Heart right ventricle (tissue), 16 donors: ENCODE measurements at regions of chr1 and their contacts with region 1.

Region 1: GRCh38 chr1:225999227-225999911 is at the start of gene SDE2:
- DNase-seq: peak; percentile 100
- ATAC-seq: peak; percentile 95 to 99 (median 97)
- H3K4me3 ChIP-seq: peak within 1 kb of the TSS; percentile 62 to 94 (median 76)
- H3K27ac ChIP-seq: peak within 1 kb of the TSS; percentile 91 to 100 (median 96)
- H3K4me1 ChIP-seq: peaks cover 13 to 73% (median 61%) of the 10 kb centered on the region in 9 donors
- H3K27me3 ChIP-seq: no peaks in the 10 kb centered on the region
- CTCF ChIP-seq: peak in 2 of 9 donors; percentile 15 to 26
- total RNA-seq, gene SDE2: 10.3 to 20.3 (median 13.9) TPM

Region 2: GRCh38 chr1:226034482-226034881 is 35.1 kb after region 1 on chr1:
- intact Hi-C with region 1: no loop called
- DNase-seq: peak; percentile 83 to 84
- ATAC-seq: peak; percentile 91 to 99 (median 94)
- H3K4me3 ChIP-seq: no peak overlapping the region
- H3K27ac ChIP-seq: peak overlapping the region in 9 of 10 donors; percentile 47 to 90 (median 72)
- H3K4me1 ChIP-seq: peaks cover 0 to 52% (median 0%) of the 10 kb centered on the region in 9 donors
- H3K27me3 ChIP-seq: no peaks in the 10 kb centered on the region
- CTCF ChIP-seq: no peak

Region 3: GRCh38 chr1:226069811-226070489 is 70.6 kb after region 1 on chr1:
- intact Hi-C with region 1: no loop called
- DNase-seq: no peak
- ATAC-seq: no peak
- H3K4me3 ChIP-seq: no peak overlapping the region
- H3K27ac ChIP-seq: no peak overlapping the region
- H3K4me1 ChIP-seq: peaks cover 5 to 66% (median 50%) of the 10 kb centered on the region in 9 donors
- H3K27me3 ChIP-seq: no peaks in the 10 kb centered on the region
- CTCF ChIP-seq: no peak

Region 4: DNA sequence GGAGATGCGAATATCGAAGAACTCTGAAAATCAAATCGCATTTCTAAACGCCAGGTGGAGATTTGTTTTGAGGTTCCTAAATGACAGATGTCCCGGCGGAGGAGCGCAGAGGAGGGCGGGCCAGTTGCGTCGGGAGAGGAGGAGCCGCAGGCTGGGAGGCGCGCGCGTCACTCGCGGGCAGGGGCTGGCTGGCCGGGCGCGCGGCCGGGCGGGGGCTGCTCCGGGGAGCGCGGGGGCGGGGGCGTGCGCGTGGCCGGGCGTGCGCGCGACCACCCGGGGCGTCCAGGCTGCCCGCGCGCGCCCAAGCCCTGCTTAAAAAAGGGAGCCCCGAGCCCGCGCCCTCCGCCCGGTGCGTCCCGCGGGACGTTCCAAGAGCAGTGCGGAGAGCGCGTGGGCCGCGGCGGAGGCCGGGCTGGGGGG is 110.5 kb after region 1 on chr1:
- intact Hi-C with region 1: loop called in 3 of 10 experiments (anchors 2 to 5 kb)
- DNase-seq: peak; percentile 90 to 92
- ATAC-seq: peak; percentile 83 to 93 (median 89)
- H3K4me3 ChIP-seq: peak overlapping the region; percentile 37 to 75 (median 68)
- H3K27ac ChIP-seq: peak overlapping the region; percentile 93 to 100 (median 99)
- H3K4me1 ChIP-seq: peaks cover 18 to 45% (median 34%) of the 10 kb centered on the region in 9 donors
- H3K27me3 ChIP-seq: no peaks in the 10 kb centered on the region
- CTCF ChIP-seq: peak in 3 of 9 donors; percentile 43 to 47 (median 47)

Region 5: GRCh38 chr1:226157761-226158316 is 158.5 kb after region 1 on chr1:
- intact Hi-C with region 1: no loop called
- DNase-seq: no peak
- ATAC-seq: no peak
- H3K4me3 ChIP-seq: no peak overlapping the region
- H3K27ac ChIP-seq: no peak overlapping the region
- H3K4me1 ChIP-seq: peaks cover 0 to 14% (median 0%) of the 10 kb centered on the region in 9 donors
- H3K27me3 ChIP-seq: no peaks in the 10 kb centered on the region
- CTCF ChIP-seq: no peak

Region 6: GRCh38 chr1:226195144-226195543 is 195.8 kb after region 1 on chr1:
- intact Hi-C with region 1: loop called in 1 of 10 experiments (anchors 5 kb)
- DNase-seq: no peak
- ATAC-seq: no peak
- H3K4me3 ChIP-seq: no peak overlapping the region
- H3K27ac ChIP-seq: no peak overlapping the region
- H3K4me1 ChIP-seq: peaks cover 0 to 4% (median 0%) of the 10 kb centered on the region in 9 donors
- H3K27me3 ChIP-seq: peaks cover 0 to 8% (median 0%) of the 10 kb centered on the region in 7 donors
- CTCF ChIP-seq: no peak

Region 7: GRCh38 chr1:226634166-226634588 is 634.8 kb after region 1 on chr1:
- intact Hi-C with region 1: no loop called
- DNase-seq: peak; percentile 80 to 86
- ATAC-seq: peak; percentile 64 to 83 (median 79)
- H3K4me3 ChIP-seq: no peak overlapping the region
- H3K27ac ChIP-seq: peak overlapping the region in 8 of 10 donors; percentile 11 to 71 (median 40)
- H3K4me1 ChIP-seq: peaks cover 7 to 68% (median 40%) of the 10 kb centered on the region in 9 donors
- H3K27me3 ChIP-seq: no peaks in the 10 kb centered on the region
- CTCF ChIP-seq: peak; percentile 93 to 98 (median 95)